HCT116 (cell line): ENCODE measurements at regions of chr5 and their contacts with region 1.

Region 1: GRCh38 chr5:109378095-109378494 is 31.7 kb downstream of the PJA2 start:
- DNase-seq: no peak
- ATAC-seq: no peak
- H3K4me3 ChIP-seq: no peak overlapping the region
- H3K27ac ChIP-seq: no peak overlapping the region
- H3K4me1 ChIP-seq: peaks cover 10 to 11% of the 10 kb centered on the region in 2 experiments
- H3K27me3 ChIP-seq: no peaks in the 10 kb centered on the region
- CTCF ChIP-seq: no peak
- POLR2A ChIP-seq: no peak
- RAD21 ChIP-seq: no peak

Region 2: DNA sequence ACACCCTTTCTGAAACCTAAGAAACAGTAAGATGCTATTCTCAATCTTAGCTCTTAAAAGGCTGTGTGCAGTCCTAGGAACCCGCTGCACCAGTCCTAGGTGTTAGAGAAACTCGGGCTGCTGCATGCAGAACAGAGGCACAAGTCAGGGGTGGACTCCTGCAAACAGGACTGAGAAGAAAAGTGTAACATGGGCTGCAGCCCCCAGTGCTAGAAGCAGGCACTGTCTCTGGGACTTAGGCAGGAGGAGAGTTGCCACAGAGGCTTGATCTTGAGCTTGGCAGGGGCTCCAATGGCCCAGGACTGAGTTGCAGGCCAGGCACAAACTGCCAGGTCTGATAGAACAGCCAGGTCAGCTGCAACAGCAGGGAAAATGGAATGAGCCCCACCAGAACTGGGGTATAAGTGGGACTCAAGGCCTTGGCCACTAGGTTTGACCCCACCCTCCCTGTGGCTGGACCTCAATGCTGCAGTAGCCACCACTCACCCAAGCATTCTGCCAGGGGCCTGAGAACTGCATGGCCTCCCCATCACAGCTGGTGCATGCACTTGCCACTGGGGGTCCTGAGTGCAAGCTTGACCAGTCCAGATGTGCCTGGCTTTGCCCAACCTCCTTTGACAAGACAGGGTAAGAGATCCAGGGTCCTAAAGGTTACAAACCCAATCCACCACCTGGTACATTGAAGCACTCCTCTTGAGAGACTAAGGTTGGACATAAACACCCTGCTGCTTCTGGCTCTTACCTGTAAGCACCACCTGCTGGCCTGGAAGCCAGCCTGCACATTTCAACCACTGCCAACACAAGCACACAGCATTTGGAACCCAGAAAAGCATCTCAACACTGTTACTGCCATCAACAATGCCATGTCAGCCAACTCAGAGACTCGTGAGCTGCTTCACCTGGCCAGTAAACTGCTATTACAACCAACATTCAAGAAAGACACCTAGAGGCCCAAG is 1099.5 kb before region 1 on chr5:
- CTCF ChIA-PET with region 1: no interaction called
- POLR2A ChIA-PET with region 1: no interaction called
- RAD21 ChIA-PET with region 1: no interaction called
- intact Hi-C with region 1: no loop called
- DNase-seq: no peak
- ATAC-seq: peak; percentile 54
- H3K4me3 ChIP-seq: no peak overlapping the region
- H3K27ac ChIP-seq: no peak overlapping the region
- H3K4me1 ChIP-seq: no peaks in the 10 kb centered on the region
- H3K27me3 ChIP-seq: no peaks in the 10 kb centered on the region
- CTCF ChIP-seq: peak in 2 of 3 experiments; percentile 24 to 45; a peak in 3 of 6 replicates
- POLR2A ChIP-seq: no peak
- RAD21 ChIP-seq: no peak

Region 3: GRCh38 chr5:109365653-109366052 is 12.4 kb before region 1 on chr5:
- CTCF ChIA-PET with region 1: no interaction called
- POLR2A ChIA-PET with region 1: no interaction called
- RAD21 ChIA-PET with region 1: no interaction called
- intact Hi-C with region 1: no loop called
- DNase-seq: no peak
- ATAC-seq: no peak
- H3K4me3 ChIP-seq: no peak overlapping the region
- H3K27ac ChIP-seq: no peak overlapping the region
- H3K4me1 ChIP-seq: no peaks in the 10 kb centered on the region
- H3K27me3 ChIP-seq: no peaks in the 10 kb centered on the region
- CTCF ChIP-seq: no peak
- POLR2A ChIP-seq: no peak
- RAD21 ChIP-seq: no peak

Region 4: DNA sequence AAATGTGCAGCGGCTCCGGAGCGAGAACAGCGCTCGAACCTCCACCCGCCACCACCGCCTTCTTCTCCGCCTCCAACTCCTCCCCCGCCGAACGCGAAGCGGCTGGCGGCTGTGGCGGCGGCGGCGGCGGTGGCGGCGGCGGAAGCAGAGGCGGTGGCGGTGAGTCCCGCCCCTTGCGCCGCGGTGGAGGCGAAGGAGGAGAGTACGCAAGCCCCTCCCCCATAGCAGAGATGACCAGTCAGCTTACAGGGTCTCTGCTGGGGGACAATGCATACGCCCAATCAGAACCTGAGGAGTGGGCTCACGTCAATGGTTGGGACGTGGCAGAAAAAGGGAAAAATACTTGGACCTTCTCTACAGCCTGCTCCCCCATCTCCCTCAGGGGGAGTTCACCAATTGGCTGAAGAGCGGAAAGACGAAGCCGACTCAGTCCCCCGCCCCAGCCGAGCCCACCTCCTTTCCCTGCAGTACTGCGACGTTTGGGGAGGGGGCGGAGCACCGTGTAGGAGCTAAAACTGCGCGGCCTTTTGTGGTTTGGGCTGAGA is 31.8 kb after region 1 on chr5 and contains the start of gene PJA2:
- CTCF ChIA-PET with region 1: no interaction called
- POLR2A ChIA-PET with region 1: no interaction called
- RAD21 ChIA-PET with region 1: no interaction called
- intact Hi-C with region 1: loop called (anchors 1 kb)
- DNase-seq: peak; percentile 99
- ATAC-seq: peak; percentile 93
- H3K4me3 ChIP-seq: peak within 1 kb of the TSS; percentile 88 to 90
- H3K27ac ChIP-seq: peak within 1 kb of the TSS; percentile 87
- H3K4me1 ChIP-seq: peaks cover 17 to 36% of the 10 kb centered on the region in 2 experiments
- H3K27me3 ChIP-seq: no peaks in the 10 kb centered on the region
- CTCF ChIP-seq: 0 out of 6 replicates have a peak, but pooled peaks of 1 of the 3 experiments have one; percentile 13
- POLR2A ChIP-seq: peak; percentile 68
- RAD21 ChIP-seq: no peak
- total RNA-seq, gene PJA2: 38.4 TPM